ENCODE measurements at regions of chr16 and their contacts with region 1.

Region 1: GRCh38 chr16:71412270-71413160 is 29.3 kb downstream of the TLE7 start:
- DNase-seq: no peak
- H3K4me3 ChIP-seq: no peak overlapping the region
- H3K27ac ChIP-seq: no peak overlapping the region
- H3K4me1 ChIP-seq: peaks cover 0 to 9% (median 0%) of the 10 kb centered on the region in 3 donors
- H3K27me3 ChIP-seq: peaks cover 0 to 59% (median 0%) of the 10 kb centered on the region in 4 donors
- CTCF ChIP-seq: peak; percentile 80 to 91 (median 83)
- POLR2A ChIP-seq: no peak

Region 2: GRCh38 chr16:71499775-71500364 is 87.4 kb after region 1 on chr16:
- intact Hi-C with region 1: loop called (anchors 5 kb)
- DNase-seq: no peak
- H3K4me3 ChIP-seq: no peak overlapping the region
- H3K27ac ChIP-seq: no peak overlapping the region
- H3K4me1 ChIP-seq: no peaks in the 10 kb centered on the region
- H3K27me3 ChIP-seq: no peaks in the 10 kb centered on the region
- CTCF ChIP-seq: peak; percentile 43 to 70 (median 54)
- POLR2A ChIP-seq: no peak

Region 3: DNA sequence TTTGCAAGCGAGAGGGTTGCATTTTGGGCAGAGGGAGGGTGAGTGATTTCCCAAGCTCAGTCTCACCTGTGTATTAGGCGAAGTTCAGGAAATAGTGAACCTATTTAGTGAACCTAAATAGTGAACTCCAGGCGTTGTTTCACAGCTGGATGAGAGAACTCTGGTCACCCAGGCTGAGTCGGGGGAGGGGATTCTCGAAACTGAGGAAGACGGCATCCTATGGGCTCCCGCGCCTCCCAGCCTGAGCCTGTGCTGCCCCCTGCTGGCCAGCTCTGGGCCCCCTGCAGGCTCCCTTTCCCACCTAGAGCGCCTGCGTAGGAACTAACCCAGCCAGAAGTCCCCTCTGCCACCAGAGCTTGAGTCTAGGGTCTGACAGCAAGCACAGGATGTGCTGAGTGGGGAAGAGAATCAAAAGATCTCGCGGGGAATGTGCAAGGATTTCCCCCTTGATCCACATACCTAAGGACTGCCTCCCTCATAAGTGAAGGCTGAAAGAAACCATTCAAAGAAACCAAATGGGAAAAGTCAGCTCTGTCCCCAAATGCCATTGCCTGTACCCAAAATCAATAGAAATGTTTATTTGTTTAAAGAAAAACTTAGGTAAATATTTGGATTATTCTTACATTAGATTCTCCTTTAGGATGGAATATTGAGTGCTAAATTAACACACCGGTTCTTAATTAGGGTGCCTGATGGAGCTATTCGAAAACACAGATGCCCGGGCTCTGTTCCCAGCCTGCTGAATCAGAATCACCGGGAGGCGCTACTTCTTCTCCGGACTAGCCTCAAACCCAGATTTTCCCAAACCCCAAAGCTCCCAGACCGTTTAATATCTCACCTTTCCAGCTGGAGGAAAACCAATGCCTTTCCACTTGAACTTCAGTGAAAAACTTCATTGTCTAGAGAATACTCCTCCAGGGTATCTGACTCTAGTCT is 198.7 kb after region 1 on chr16:
- intact Hi-C with region 1: loop called (anchors 10 kb)
- DNase-seq: no peak
- H3K4me3 ChIP-seq: no peak overlapping the region
- H3K27ac ChIP-seq: no peak overlapping the region
- H3K4me1 ChIP-seq: peaks cover 0 to 5% (median 0%) of the 10 kb centered on the region in 3 donors
- H3K27me3 ChIP-seq: peaks cover 0 to 64% (median 0%) of the 10 kb centered on the region in 4 donors
- CTCF ChIP-seq: peak; percentile 58 to 84 (median 73)
- POLR2A ChIP-seq: no peak